ENCODE measurements at regions of chr1 and their contacts with region 1.

Region 1: DNA sequence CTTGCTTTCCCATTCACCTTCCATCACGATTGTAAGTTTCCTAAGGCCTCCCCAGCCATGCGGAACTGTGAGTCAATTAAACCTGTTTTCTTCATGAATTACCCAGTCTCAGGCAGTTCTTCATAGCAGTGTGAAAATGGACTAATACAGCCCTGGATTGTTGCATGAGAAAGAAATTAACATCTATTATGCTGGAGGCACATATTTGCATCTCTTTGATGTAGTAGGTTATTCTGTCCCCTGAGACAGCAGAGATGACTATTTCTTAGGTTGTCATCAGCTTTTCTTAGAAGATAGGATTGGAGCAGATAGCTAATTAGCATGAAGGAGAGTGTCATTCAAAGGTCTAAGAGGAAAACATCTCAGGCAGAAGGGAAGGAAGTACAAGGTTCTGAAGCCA is 166.2 kb downstream of the OMA1 start:
- DNase-seq: no peak
- CTCF ChIP-seq: no peak

Region 2: GRCh38 chr1:58367217-58367616 is 13.1 kb before region 1 on chr1:
- CTCF ChIA-PET with region 1: no interaction called
- POLR2A ChIA-PET with region 1: no interaction called
- DNase-seq: no peak
- CTCF ChIP-seq: no peak

Region 3: DNA sequence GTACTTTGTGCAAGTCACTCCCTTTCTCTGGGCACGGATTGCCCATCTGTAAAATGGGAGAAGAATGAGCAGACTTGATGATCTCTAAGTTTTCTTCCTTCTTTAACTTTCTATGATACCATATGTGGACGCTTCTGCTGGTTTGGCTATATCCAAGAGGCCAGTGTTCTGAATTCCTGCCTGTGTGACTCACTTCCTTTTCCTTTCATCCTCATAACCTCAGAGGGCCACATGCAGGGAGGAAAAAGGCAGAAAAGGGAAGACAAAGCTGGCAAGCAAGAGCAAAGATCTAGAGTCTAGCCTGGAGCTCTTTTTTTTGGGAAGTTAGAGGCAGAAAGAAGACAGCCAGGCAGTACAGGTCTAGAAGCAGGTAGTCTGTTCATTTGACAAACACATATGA is 15.0 kb after region 1 on chr1:
- CTCF ChIA-PET with region 1: interaction called, 16 read pairs
- POLR2A ChIA-PET with region 1: no interaction called
- DNase-seq: no peak
- CTCF ChIP-seq: no peak